ENCODE measurements at regions of chrX and their contacts with region 1.

Region 1: GRCh38 chrX:49043220-49043986 is at the start of gene TFE3:
- DNase-seq: peak; percentile 89 to 99 (median 92)
- ATAC-seq: peak; percentile 90
- H3K4me3 ChIP-seq: peak within 1 kb of the TSS; percentile 97
- H3K27ac ChIP-seq: peak within 1 kb of the TSS; percentile 89
- H3K4me1 ChIP-seq: peaks cover 39 to 42% of the 10 kb centered on the region in 2 experiments; a peak in 4 of 5 replicates
- H3K27me3 ChIP-seq: no peaks in the 10 kb centered on the region
- CTCF ChIP-seq: peak; percentile 76 to 86 (median 84)
- EP300 ChIP-seq: peak; percentile 20; the same call in 1 of the 2 replicates
- POLR2A ChIP-seq: no peak; the same call in 1 of the 2 replicates
- RAD21 ChIP-seq: peak; percentile 68 to 80
- polyA plus RNA-seq, gene TFE3: 1.9 to 3.8 TPM

Region 2: DNA sequence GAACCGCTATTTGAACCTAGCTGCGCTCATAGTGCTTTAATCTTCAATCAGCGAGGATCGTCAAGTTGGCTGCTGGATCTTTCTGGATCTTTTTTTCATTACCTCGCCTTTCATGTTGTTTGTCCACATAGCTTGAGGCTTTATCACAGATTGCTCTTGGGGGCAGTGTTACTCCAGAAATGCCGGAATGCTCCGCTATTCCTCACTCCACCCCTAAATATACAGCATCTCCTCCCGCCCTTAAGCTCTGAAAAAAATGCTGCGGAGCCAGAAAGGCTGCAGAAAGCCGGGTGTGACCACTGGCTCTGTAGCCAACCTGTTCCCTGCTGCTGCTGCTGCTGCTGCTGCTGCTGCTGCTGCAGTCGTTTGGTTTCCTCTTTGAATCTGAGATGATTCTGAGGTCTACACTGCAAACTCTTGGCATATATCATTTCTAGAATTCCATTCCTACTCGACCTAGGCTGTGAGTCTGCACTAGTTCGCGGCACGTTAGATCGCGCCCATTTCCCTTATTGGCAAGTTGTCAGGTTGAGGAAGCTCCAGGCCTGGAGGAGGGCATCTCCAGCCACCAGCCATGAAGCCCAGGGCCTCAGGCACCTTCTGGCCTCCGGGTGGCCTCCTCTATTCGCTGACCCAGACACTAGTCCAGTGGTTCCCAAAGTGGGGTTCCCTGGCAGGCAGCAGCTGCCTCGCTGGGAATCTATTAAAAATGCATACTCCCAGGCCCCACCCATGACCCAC is 411.9 kb before region 1 on chrX:
- CTCF ChIA-PET with region 1: no interaction called
- POLR2A ChIA-PET with region 1: no interaction called
- in situ Hi-C with region 1: no loop called
- intact Hi-C with region 1: loop called (anchors 2 kb)
- DNase-seq: peak; percentile 66 to 93 (median 81)
- ATAC-seq: peak; percentile 99
- H3K4me3 ChIP-seq: peak overlapping the region; percentile 4; the same call in 1 of the 2 replicates
- H3K27ac ChIP-seq: peak overlapping the region; percentile 26; the same call in 1 of the 3 replicates
- H3K4me1 ChIP-seq: peaks cover 9% of the 10 kb centered on the region in 2 experiments; a peak in 4 of 5 replicates
- H3K27me3 ChIP-seq: no peaks in the 10 kb centered on the region
- CTCF ChIP-seq: peak; percentile 66 to 89 (median 78)
- EP300 ChIP-seq: peak; percentile 62
- POLR2A ChIP-seq: no peak
- RAD21 ChIP-seq: peak; percentile 93 to 94

Region 3: DNA sequence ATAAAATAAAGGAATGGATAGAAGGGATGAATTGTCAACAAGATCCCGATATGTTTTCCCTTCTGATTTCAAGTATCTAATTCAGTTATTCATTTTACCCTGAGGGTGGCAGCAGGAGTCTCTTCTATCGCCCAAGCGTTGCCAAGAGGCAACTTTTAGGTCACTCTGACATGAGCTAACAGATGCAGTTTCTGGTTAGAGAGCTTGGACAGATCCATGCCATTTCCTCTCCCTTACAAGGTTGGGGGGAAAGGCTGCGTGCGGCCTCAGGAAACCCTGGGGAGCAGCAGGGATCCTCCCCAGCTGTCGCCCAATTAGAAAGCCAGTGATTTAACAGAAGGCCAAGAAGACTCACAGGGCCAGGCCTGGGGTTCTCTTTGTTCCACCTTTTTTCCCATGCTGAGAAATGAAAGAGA is 395.1 kb before region 1 on chrX:
- CTCF ChIA-PET with region 1: no interaction called
- POLR2A ChIA-PET with region 1: no interaction called
- in situ Hi-C with region 1: no loop called
- intact Hi-C with region 1: no loop called
- DNase-seq: peak in 2 of 4 experiments; percentile 12 to 48
- ATAC-seq: peak; percentile 77
- H3K4me3 ChIP-seq: no peak overlapping the region
- H3K27ac ChIP-seq: no peak overlapping the region
- H3K4me1 ChIP-seq: no peaks in the 10 kb centered on the region; a peak in 2 of 5 replicates
- H3K27me3 ChIP-seq: no peaks in the 10 kb centered on the region
- CTCF ChIP-seq: peak; percentile 19 to 57 (median 31); a peak in 3 of 6 replicates
- EP300 ChIP-seq: no peak
- POLR2A ChIP-seq: no peak
- RAD21 ChIP-seq: peak; percentile 26 to 63; a peak in 3 of 4 replicates

Region 4: DNA sequence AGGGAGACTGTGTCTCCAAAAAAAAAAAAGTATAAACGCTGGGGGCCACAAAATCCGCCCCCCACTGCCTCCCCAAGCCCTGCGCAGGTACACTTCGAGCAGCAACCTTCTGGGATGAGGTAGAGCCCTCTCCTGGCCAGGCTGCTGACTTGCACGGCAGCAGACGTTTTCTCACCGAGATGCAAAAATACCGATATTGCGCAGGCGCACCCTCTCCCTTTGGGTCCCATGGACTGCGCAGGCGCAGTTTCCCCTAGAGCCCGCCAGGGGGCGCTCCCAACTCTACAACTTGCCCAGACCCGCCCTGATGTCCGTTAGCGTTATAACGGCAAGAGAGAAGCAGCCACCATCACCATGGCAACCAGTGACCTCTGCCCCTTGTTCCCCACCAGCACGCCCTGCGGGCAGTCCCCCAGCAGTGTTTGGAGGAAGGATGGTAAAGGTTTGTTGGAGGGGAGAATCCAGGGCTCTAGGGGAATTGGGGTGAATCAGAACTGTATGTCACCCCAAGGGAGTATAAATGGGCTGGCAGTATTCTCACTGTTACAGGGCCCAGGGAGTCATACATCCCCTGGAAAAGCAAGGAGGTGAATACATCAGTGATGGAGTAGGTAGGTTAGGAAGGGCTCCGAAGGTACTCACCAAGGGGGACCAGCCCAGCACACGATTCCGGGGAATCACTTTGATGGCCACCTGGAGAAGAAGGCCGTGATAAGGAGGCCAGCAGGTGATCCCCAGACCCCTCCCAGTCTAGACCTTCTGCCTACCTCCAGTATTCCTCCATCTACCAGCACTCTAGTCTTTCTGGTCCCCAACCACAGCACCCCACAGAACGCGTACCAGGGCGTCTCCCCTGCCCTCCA is 126.0 kb before region 1 on chrX:
- CTCF ChIA-PET with region 1: no interaction called
- POLR2A ChIA-PET with region 1: no interaction called
- in situ Hi-C with region 1: no loop called
- intact Hi-C with region 1: loop called (anchors 1 kb)
- DNase-seq: peak; percentile 76 to 96 (median 86)
- ATAC-seq: peak; percentile 68
- H3K4me3 ChIP-seq: peak overlapping the region; percentile 89
- H3K27ac ChIP-seq: peak overlapping the region; percentile 77
- H3K4me1 ChIP-seq: peaks cover 37 to 47% of the 10 kb centered on the region in 2 experiments
- H3K27me3 ChIP-seq: no peaks in the 10 kb centered on the region; a peak in 1 of 5 replicates
- CTCF ChIP-seq: peak; percentile 85 to 98 (median 95)
- EP300 ChIP-seq: peak; percentile 86
- POLR2A ChIP-seq: no peak
- RAD21 ChIP-seq: peak in 1 of 2 experiments; percentile 67

Region 5: DNA sequence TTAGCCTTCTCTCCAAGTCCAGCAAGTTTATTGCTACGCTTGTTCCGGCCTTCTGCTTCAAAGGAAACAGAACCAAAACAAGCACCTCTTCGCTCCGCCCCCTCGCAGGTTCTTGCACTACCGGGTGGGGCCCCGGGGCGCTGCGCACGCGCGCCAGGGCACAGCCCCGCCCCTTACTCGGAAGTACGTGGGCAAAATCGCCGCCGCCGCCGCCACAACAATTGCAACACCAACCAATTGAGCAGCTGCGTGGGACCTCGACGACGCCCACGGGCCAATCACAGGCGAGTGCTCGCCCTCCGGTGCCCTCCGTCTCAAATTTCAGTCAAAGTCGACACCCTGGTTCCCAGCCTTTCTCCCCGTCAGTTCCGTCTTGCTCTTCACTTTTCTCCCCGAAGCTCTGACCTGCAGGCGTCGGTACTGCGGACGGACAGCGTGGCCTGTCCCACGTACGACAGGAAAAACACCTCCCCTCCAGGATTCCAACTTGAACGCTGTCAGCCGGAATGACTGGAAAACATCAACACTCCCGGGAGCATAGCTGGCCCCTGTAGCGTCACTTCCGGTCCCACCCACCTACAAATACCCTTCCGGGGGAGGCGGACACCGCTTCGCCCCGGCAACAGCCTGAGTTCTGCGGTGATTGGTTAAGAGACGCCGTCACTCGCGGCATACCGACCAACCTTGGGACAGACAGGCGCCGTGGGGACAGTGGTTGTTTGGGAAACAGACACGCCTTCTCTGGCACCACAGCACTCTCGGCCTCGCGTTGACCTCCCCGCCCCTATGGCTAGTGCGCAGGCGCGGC is 85.4 kb before region 1 on chrX:
- CTCF ChIA-PET with region 1: no interaction called
- POLR2A ChIA-PET with region 1: interaction called, 3 read pairs
- in situ Hi-C with region 1: no loop called
- intact Hi-C with region 1: loop called (anchors 1 kb)
- DNase-seq: peak; percentile 90 to 98 (median 92)
- ATAC-seq: peak; percentile 87
- H3K4me3 ChIP-seq: peak overlapping the region; percentile 84
- H3K27ac ChIP-seq: peak overlapping the region; percentile 98
- H3K4me1 ChIP-seq: peaks cover 34 to 57% of the 10 kb centered on the region in 2 experiments
- H3K27me3 ChIP-seq: no peaks in the 10 kb centered on the region; a peak in 1 of 5 replicates
- CTCF ChIP-seq: no peak
- EP300 ChIP-seq: no peak
- POLR2A ChIP-seq: peak; percentile 83
- RAD21 ChIP-seq: no peak

Region 6: GRCh38 chrX:49100704-49101628 is 57.6 kb after region 1 on chrX:
- CTCF ChIA-PET with region 1: no interaction called
- POLR2A ChIA-PET with region 1: interaction called, 4 read pairs
- in situ Hi-C with region 1: no loop called
- intact Hi-C with region 1: loop called (anchors 5 kb)
- DNase-seq: peak; percentile 97 to 99 (median 98)
- ATAC-seq: peak; percentile 94
- H3K4me3 ChIP-seq: peak overlapping the region; percentile 58
- H3K27ac ChIP-seq: peak overlapping the region; percentile 97
- H3K4me1 ChIP-seq: peaks cover 6 to 14% of the 10 kb centered on the region in 2 experiments; a peak in 4 of 5 replicates
- H3K27me3 ChIP-seq: no peaks in the 10 kb centered on the region
- CTCF ChIP-seq: no peak
- EP300 ChIP-seq: no peak
- POLR2A ChIP-seq: peak; percentile 89
- RAD21 ChIP-seq: no peak

Measured in K562 (cell line).